Panc1 (cell line): ENCODE measurements at regions of chr2 and their contacts with region 1.

Region 1: GRCh38 chr2:26605195-26605998 is 35.8 kb downstream of the CIB4 start:
- DNase-seq: peak; percentile 60
- ATAC-seq: peak; percentile 90
- H3K4me3 ChIP-seq: no peak overlapping the region
- H3K27ac ChIP-seq: peak overlapping the region; percentile 49; the same call in 1 of the 2 replicates
- H3K4me1 ChIP-seq: peaks cover 5% of the 10 kb centered on the region; the same call in 1 of the 2 replicates
- H3K27me3 ChIP-seq: peaks cover 7% of the 10 kb centered on the region; the same call in 1 of the 2 replicates
- CTCF ChIP-seq: peak; percentile 85

Region 2: DNA sequence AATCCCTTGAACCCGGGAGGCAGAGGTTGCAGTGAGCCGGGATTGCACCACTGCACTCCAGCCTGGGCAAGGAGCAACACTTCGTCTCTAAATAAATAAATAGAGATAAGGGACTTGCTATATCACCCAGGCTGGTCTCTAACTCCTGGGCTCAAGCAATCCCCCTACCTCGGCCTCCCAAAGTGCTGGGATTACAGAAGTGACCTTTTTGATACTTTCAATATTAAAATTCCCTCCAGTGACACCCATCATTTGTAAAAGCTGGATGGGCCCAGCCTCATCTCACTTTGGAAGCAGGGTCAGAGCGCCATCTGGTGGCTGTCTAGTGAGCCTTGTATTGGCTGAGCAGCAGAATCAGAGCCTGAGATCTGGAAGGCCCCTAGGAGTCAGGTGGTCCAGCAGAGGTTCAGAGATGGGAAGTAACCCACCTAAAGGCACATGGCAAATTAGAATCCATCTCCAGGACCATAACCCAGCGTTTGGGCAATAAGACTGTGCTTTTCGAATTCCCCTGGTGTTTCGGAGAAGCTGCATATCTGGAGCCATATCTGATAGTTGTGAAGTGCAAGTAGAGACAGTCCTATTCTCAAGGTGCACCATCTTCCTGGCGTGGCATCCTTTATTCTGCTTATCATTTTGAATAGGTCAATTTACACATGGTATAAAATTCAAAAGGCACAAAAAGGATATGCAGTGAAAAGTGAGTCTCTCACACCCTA is 140.4 kb after region 1 on chr2:
- CTCF ChIA-PET with region 1: interaction called, 7 read pairs
- POLR2A ChIA-PET with region 1: no interaction called
- in situ Hi-C with region 1: no loop called
- intact Hi-C with region 1: loop called (anchors 1 kb)
- DNase-seq: peak; percentile 64
- ATAC-seq: peak; percentile 94
- H3K4me3 ChIP-seq: no peak overlapping the region
- H3K27ac ChIP-seq: no peak overlapping the region
- H3K4me1 ChIP-seq: peaks cover 5% of the 10 kb centered on the region; the same call in 1 of the 2 replicates
- H3K27me3 ChIP-seq: no peaks in the 10 kb centered on the region
- CTCF ChIP-seq: peak; percentile 94

Region 3: DNA sequence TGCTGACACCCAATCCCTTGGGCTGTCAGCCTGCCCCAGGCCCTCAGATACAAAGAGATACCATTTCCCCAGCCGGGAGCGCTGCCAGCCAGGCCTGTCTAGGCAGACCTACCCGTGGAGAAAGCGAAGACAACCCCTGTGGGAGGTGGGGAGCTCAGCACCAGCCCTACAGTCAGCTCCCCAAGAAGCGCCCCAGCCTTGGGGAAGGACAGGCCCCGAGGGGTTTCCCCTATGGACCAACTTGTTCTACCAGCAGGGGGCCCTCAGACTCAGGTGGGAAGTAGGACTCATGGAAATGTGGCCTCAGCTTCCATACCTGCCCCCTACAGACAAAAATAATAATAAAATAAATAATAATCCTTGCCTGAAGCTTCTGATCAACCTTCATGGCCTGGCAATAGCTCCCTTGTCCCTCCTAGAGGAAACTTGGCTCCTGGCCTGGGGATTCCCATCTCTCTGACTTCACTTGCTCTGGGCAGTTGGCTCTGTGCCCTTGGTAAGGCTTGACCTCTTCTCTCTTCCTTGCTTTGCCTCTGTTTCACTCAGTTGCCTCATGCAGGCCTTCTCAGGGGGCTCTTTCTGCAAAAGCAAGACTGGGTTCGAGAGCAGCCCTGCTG is 165.7 kb after region 1 on chr2:
- CTCF ChIA-PET with region 1: no interaction called
- POLR2A ChIA-PET with region 1: no interaction called
- in situ Hi-C with region 1: no loop called
- intact Hi-C with region 1: no loop called
- DNase-seq: no peak
- ATAC-seq: peak; percentile 59
- H3K4me3 ChIP-seq: no peak overlapping the region
- H3K27ac ChIP-seq: peak overlapping the region; percentile 86
- H3K4me1 ChIP-seq: peaks cover 59% of the 10 kb centered on the region
- H3K27me3 ChIP-seq: no peaks in the 10 kb centered on the region
- CTCF ChIP-seq: no peak